ENCODE measurements at regions of chr2 and their contacts with region 1.

Region 1: GRCh38 chr2:9555297-9556141 is at the start of gene ADAM17:
- DNase-seq: peak; percentile 75 to 96 (median 91)
- H3K4me3 ChIP-seq: peak within 1 kb of the TSS; percentile 65 to 99 (median 93)
- H3K27ac ChIP-seq: peak within 1 kb of the TSS; percentile 75 to 99 (median 97)
- H3K27me3 ChIP-seq: no peaks in the 10 kb centered on the region
- CTCF ChIP-seq: peak in 55 of 56 donors; percentile 19 to 84 (median 66)
- total RNA-seq, gene ADAM17: 20.3 to 43.9 (median 31.0) TPM

Region 2: DNA sequence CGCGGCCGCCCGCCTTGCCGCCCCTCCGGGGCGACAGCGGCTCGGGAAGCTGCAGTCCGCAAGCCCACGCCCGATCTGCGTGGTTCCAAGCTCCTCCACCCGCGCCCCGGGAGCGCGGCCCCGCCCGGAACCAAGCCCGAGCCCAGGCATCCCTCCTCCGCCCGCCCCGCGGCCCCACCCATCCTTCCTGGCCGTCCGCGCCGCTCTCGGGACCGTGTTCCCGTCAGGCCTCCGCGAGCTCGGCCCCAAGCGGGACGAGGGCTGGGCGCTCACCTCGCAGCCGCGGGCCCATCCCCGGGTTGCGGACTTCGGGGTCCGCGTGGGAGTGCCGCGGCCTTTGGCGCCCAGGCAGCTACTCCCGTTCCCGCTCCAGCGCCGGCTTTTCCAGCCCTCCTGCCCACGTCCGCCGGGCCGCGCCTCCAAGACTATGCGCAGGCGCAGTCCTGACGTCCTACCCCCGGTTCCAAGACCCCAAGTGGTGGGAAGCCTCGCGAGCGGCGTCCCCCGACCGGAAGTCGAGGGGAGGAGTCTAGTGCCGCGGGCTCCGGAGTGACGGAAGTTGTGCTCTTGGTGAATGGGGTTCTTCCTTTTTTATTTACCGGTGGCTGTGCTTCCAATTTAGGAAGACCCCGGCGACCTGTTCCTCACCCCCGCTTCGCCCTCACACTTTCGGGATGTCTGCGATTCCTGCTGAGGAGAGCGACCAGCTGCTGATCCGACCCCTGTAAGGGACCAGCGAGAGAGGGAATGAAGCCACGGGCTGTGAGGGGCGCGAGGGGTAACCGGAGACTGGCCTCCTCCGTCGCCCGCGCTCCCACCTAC is 132.2 kb before region 1 on chr2 and contains the starts of genes CPSF3 and ITGB1BP1:
- intact Hi-C with region 1: loop called in 1 of 2 experiments (anchors 10 kb)
- DNase-seq: peak; percentile 92 to 98 (median 96)
- H3K4me3 ChIP-seq: peak within 1 kb of the TSS; percentile 55 to 100 (median 94)
- H3K27ac ChIP-seq: peak within 1 kb of the TSS; percentile 74 to 98 (median 92)
- H3K27me3 ChIP-seq: no peaks in the 10 kb centered on the region
- CTCF ChIP-seq: peak in 35 of 56 donors; percentile 4 to 64 (median 33)
- total RNA-seq, gene CPSF3: 11.9 to 33.6 (median 22.9) TPM
- total RNA-seq, gene ITGB1BP1: 75.1 to 226 (median 141) TPM

Region 3: GRCh38 chr2:9474361-9474967 is 81.1 kb before region 1 on chr2 and contains the start of gene IAH1:
- intact Hi-C with region 1: loop called (anchors 1 to 5 kb)
- DNase-seq: peak; percentile 49 to 76 (median 68)
- H3K4me3 ChIP-seq: peak within 1 kb of the TSS; percentile 63 to 97 (median 88)
- H3K27ac ChIP-seq: peak within 1 kb of the TSS; percentile 48 to 99 (median 94)
- H3K27me3 ChIP-seq: no peaks in the 10 kb centered on the region
- CTCF ChIP-seq: peak in 25 of 56 donors; percentile 2 to 42 (median 23)
- total RNA-seq, gene IAH1: 46.2 to 81.5 (median 64.4) TPM

Region 4: GRCh38 chr2:9630749-9631483 is 75.4 kb after region 1 on chr2 and contains the start of gene YWHAQ:
- intact Hi-C with region 1: loop called (anchors 2 to 5 kb)
- DNase-seq: peak; percentile 94 to 100 (median 99)
- H3K4me3 ChIP-seq: peak within 1 kb of the TSS; percentile 61 to 98 (median 87)
- H3K27ac ChIP-seq: peak within 1 kb of the TSS; percentile 81 to 99 (median 93)
- H3K27me3 ChIP-seq: no peaks in the 10 kb centered on the region
- CTCF ChIP-seq: peak in 12 of 56 donors; percentile 7 to 33 (median 19)
- total RNA-seq, gene YWHAQ: 223 to 572 (median 337) TPM

Region 5: DNA sequence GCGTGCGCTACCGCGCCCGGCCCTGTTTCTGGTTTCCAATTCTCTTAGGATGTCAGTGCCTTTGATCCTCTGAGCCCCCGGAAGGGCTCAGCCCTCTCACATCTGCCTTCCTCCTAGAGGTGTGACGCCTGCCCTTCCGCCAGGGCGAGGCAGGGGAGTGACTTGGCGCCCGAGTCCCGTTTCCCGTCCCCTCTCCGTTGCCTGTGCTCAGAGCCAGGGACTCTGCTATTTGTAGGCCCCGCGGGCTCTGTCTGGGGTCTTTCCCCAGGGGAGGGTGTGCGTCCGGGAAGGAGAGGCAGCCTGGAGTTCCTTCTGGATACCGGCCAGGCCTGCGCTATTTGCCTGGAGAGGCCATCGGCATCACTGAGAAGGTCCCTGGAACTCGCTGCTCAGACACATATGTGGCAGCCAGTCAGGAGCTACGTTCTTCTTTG is 184.0 kb after region 1 on chr2:
- intact Hi-C with region 1: no loop called
- DNase-seq: no peak
- H3K4me3 ChIP-seq: peak overlapping the region in 41 of 59 donors; percentile 1 to 46 (median 22)
- H3K27ac ChIP-seq: peak overlapping the region in 16 of 59 donors; percentile 1 to 75 (median 42)
- H3K27me3 ChIP-seq: no peaks in the 10 kb centered on the region
- CTCF ChIP-seq: no peak

Region 6: DNA sequence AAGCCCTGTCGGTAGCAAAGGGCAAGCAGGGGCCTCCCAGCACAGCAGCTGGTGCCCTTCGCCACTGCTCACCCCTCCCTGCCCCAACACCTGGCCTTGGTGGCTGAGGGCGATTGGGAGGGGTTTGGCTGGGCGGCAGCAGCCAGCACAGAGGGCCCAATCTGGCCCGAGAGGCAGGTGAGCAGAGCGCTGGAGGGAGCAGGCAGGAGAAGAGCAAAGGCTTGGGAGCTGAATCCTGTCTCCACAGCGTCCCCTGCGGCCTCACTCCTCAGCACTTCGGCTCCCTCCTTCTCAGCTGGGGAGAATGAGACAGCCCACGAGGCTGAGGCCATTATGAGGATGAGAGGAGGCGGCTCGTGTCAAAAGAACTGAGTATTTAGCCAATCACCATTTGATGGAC is 212.9 kb after region 1 on chr2:
- intact Hi-C with region 1: loop called (anchors 5 to 10 kb)
- DNase-seq: peak in 3 of 10 donors; percentile 41 to 66 (median 60)
- H3K4me3 ChIP-seq: no peak overlapping the region
- H3K27ac ChIP-seq: peak overlapping the region in 21 of 59 donors; percentile 26 to 90 (median 78)
- H3K27me3 ChIP-seq: no peaks in the 10 kb centered on the region
- CTCF ChIP-seq: peak in 13 of 56 donors; percentile 6 to 32 (median 14)

Region 7: GRCh38 chr2:9843229-9844035 is 287.9 kb after region 1 on chr2 and contains the start of gene TAF1B:
- intact Hi-C with region 1: loop called in 1 of 2 experiments (anchors 5 kb)
- DNase-seq: peak; percentile 55 to 87 (median 74)
- H3K4me3 ChIP-seq: peak within 1 kb of the TSS; percentile 50 to 98 (median 80)
- H3K27ac ChIP-seq: peak within 1 kb of the TSS in 58 of 59 donors; percentile 14 to 94 (median 73)
- H3K27me3 ChIP-seq: no peaks in the 10 kb centered on the region
- CTCF ChIP-seq: peak in 34 of 56 donors; percentile 4 to 69 (median 34)
- total RNA-seq, gene TAF1B: 9.0 to 34.9 (median 19.6) TPM